Activated naive CD4-positive, alpha-beta T cell treated with anti-CD3 and anti-CD28 coated beads for 36 hours (primary cell): ENCODE measurements at regions of chr1 and their contacts with region 1.

Region 1: GRCh38 chr1:114745291-114745690 is 12.5 kb downstream of the CSDE1 start:
- DNase-seq: peak; percentile 14
- H3K4me3 Mint-ChIP-seq: no peak overlapping the region
- H3K27ac Mint-ChIP-seq: no peak overlapping the region
- H3K4me1 Mint-ChIP-seq: peaks cover 74% of the 10 kb centered on the region
- H3K27me3 Mint-ChIP-seq: no peaks in the 10 kb centered on the region

Region 2: DNA sequence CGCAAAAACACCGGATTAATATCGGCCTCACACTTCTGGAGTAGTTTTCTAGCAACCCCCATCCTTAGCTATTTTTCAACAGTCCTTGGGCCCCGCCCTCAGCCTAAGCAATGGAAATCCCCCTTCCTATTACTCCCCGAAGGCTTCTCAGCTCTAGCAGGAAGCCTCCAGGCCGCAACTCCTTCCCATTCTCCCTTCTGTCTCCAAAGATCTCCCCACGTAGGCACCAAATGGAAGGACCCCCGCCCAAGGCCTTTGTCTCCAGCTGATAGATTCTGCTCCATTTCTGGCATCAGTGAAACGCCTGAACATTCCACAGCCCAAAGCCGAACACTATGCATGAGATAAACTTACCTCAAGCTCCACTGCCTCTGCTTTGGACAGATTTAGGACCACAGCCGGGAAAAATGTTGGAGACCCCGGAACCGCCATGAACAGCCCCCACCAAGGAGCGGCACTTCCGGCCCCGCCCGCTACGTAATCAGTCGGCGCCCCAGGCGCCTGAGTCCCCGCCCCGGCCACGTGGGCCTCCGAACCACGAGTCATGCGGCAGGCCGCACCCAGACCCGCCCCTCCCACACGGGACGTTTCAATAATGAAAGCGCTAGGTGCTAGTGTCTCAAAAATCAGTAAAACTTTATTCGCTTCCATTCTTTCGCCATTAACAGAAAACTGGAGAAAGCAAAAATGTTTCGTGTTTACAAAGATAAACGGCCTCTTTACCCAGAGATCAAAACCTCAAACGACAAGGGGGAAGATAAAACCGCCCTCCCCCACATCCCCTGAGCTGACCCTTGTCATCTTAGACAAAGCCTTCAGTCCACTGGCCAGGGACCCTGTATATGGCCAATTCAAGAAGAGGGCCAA is 28.8 kb before region 1 on chr1 and contains the start of gene NRAS:
- CTCF ChIA-PET with region 1: no interaction called
- intact Hi-C with region 1: loop called (anchors 1 kb)
- DNase-seq: peak; percentile 96
- H3K4me3 Mint-ChIP-seq: peak within 1 kb of the TSS; percentile 98
- H3K27ac Mint-ChIP-seq: peak within 1 kb of the TSS; percentile 99
- H3K4me1 Mint-ChIP-seq: peaks cover 27% of the 10 kb centered on the region
- H3K27me3 Mint-ChIP-seq: no peaks in the 10 kb centered on the region
- total RNA-seq, gene NRAS: 42.1 to 43.9 TPM

Region 3: GRCh38 chr1:114723915-114724314 is 21.4 kb before region 1 on chr1:
- CTCF ChIA-PET with region 1: no interaction called
- intact Hi-C with region 1: loop called (anchors 1 kb)
- DNase-seq: no peak
- H3K4me3 Mint-ChIP-seq: no peak overlapping the region
- H3K27ac Mint-ChIP-seq: peak overlapping the region; percentile 21
- H3K4me1 Mint-ChIP-seq: peaks cover 14% of the 10 kb centered on the region
- H3K27me3 Mint-ChIP-seq: no peaks in the 10 kb centered on the region

Region 4: DNA sequence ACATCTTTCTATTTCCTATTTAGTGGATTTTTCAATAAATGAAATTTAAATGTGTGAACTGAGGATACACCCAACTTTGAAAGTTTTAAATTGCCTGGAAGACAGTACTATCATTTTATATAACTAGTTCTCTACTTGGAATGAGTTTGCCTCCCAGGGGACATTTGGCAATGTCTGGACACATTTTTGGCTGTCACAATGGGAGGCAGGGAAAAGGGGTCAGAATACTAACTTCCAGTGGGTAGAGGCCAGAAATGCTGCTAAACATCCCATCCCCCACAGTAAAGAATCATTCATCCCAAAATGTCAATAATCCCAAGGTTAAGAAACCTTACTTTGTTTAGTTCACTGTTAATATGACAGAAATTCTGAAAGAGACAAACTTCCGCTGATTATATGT is 15.5 kb before region 1 on chr1:
- CTCF ChIA-PET with region 1: no interaction called
- intact Hi-C with region 1: loop called (anchors 1 kb)
- DNase-seq: no peak
- H3K4me3 Mint-ChIP-seq: no peak overlapping the region
- H3K27ac Mint-ChIP-seq: no peak overlapping the region
- H3K4me1 Mint-ChIP-seq: peaks cover 8% of the 10 kb centered on the region
- H3K27me3 Mint-ChIP-seq: no peaks in the 10 kb centered on the region

Region 5: GRCh38 chr1:114780344-114781226 is 35.3 kb after region 1 on chr1 and contains the start of gene SIKE1:
- CTCF ChIA-PET with region 1: no interaction called
- intact Hi-C with region 1: loop called (anchors 5 kb)
- DNase-seq: peak; percentile 97
- H3K4me3 Mint-ChIP-seq: peak within 1 kb of the TSS; percentile 100
- H3K27ac Mint-ChIP-seq: peak within 1 kb of the TSS; percentile 97
- H3K4me1 Mint-ChIP-seq: peaks cover 24% of the 10 kb centered on the region
- H3K27me3 Mint-ChIP-seq: no peaks in the 10 kb centered on the region
- total RNA-seq, gene SIKE1: 60.2 to 60.6 TPM